Cardiac septum (tissue), 1 donor: ENCODE measurements at regions of chr11 and their contacts with region 1.

Region 1: GRCh38 chr11:33542921-33543320 is 157.7 kb downstream of the C11orf91 start:
- DNase-seq: no peak

Region 2: DNA sequence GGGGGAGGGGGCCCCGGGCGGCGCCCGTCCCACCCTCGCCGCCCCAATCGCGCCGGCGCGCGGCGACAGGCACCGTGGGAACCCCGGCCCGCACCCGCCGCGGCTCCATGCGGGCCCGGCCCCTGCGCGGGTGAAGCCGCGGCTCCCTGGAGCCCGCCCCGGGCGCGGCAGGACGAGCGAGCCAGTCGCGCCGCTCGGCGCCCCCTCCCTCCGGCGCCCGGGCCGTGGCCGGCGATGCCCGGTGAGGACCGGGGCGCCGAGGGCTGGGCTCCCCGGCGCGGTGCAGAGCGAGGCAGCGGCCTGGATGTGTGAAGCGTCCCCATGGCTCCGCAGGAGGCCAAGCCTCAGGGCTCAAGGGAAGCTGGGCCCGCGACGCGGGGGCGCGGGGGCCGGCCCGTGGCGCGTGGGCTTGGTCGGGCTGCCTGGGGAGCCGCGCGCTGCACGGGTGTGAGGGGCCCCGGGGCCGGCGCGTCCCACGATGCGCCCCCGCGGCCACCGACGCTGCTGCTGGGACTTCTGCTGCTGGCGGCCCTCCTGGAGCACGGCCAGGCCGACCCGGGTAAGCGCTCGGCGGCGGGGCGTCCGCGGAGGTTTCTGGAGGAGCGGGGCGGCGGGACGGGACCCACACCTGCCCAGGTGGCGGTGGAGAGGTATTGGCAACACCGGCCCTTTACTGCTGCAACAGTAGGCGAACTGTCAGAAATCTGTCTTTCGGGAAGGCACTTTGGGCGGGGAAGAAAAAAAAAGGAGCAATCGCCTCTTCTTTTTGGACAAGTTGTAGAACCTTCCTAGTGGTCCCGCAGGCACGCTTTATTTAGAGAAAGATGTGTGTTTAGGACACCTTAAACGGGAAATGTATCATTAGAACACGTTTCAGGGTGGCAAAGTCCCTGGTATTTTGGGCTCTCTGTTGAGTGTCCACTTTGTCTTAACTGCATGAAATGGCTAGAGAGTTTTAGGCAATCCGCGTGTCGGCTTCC is 166.3 kb before region 1 on chr11:
- intact Hi-C with region 1: loop called (anchors 10 kb)
- DNase-seq: no peak

Region 3: DNA sequence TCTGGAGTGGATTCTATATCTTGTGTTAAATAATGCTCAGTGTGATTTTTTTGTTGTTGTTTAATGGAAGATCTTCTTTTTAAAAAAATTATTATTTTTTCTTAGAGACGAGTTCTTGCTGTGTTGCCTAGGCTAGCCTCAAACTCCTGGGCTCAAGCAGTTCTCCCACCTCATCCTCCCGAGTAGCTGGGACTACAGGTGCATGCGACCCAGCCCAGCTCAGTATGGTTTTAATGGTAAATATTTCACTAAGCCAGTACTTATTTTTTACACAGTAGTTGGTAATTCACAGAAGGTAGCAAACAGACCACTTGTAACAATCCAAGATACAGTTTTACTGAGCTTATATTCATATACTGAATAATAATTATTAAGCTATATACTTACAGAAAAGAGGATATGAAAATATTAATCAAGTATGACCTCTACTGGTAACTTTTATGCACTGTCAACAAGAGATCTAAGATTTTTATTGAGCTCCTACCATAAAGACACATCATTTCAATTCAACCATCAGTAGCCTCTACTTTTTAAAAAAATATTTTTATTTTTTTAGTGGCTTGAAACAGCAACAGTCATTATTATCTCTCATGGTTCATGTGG is 199.4 kb after region 1 on chr11:
- intact Hi-C with region 1: loop called (anchors 5 kb)
- DNase-seq: no peak